CD8-positive, alpha-beta T cell (primary cell): ENCODE measurements at regions of chr15 and their contacts with region 1.

Region 1: GRCh38 chr15:75023181-75023871 is at the start of gene PPCDC:
- DNase-seq: peak; percentile 81 to 96 (median 93)
- ATAC-seq: peak; percentile 100
- H3K4me3 ChIP-seq: peak within 1 kb of the TSS; percentile 82 to 93
- H3K4me3 Mint-ChIP-seq: peak within 1 kb of the TSS; percentile 92
- H3K27ac ChIP-seq: peak within 1 kb of the TSS; percentile 76 to 77
- H3K27ac Mint-ChIP-seq: peak within 1 kb of the TSS; percentile 92
- H3K4me1 ChIP-seq: peaks cover 8% of the 10 kb centered on the region
- H3K4me1 Mint-ChIP-seq: peaks cover 14% of the 10 kb centered on the region
- H3K27me3 ChIP-seq: no peaks in the 10 kb centered on the region
- H3K27me3 Mint-ChIP-seq: no peaks in the 10 kb centered on the region
- CTCF ChIP-seq: no peak
- total RNA-seq, gene PPCDC: 6.0 to 6.5 TPM

Region 2: GRCh38 chr15:74584779-74585178 is 438.5 kb before region 1 on chr15:
- CTCF ChIA-PET with region 1: no interaction called
- POLR2A ChIA-PET with region 1: no interaction called
- intact Hi-C with region 1: no loop called
- DNase-seq: no peak
- ATAC-seq: no peak
- H3K4me3 ChIP-seq: no peak overlapping the region
- H3K4me3 Mint-ChIP-seq: no peak overlapping the region
- H3K27ac ChIP-seq: no peak overlapping the region
- H3K27ac Mint-ChIP-seq: no peak overlapping the region
- H3K4me1 ChIP-seq: no peaks in the 10 kb centered on the region
- H3K4me1 Mint-ChIP-seq: no peaks in the 10 kb centered on the region
- H3K27me3 ChIP-seq: no peaks in the 10 kb centered on the region
- H3K27me3 Mint-ChIP-seq: no peaks in the 10 kb centered on the region
- CTCF ChIP-seq: no peak

Region 3: GRCh38 chr15:74695597-74696397 is 327.5 kb before region 1 on chr15 and contains the start of gene EDC3:
- CTCF ChIA-PET with region 1: no interaction called
- POLR2A ChIA-PET with region 1: no interaction called
- intact Hi-C with region 1: loop called (anchors 2 to 5 kb)
- DNase-seq: peak; percentile 72 to 94 (median 89)
- ATAC-seq: peak; percentile 88
- H3K4me3 ChIP-seq: peak within 1 kb of the TSS; percentile 79 to 93
- H3K4me3 Mint-ChIP-seq: peak within 1 kb of the TSS; percentile 100
- H3K27ac ChIP-seq: peak within 1 kb of the TSS; percentile 80 to 83
- H3K27ac Mint-ChIP-seq: peak within 1 kb of the TSS; percentile 99
- H3K4me1 ChIP-seq: peaks cover 14% of the 10 kb centered on the region
- H3K4me1 Mint-ChIP-seq: peaks cover 47% of the 10 kb centered on the region
- H3K27me3 ChIP-seq: peaks cover 0 to 1% of the 10 kb centered on the region in 2 experiments
- H3K27me3 Mint-ChIP-seq: no peaks in the 10 kb centered on the region
- CTCF ChIP-seq: no peak
- total RNA-seq, gene EDC3: 9.8 to 11.8 TPM

Region 4: GRCh38 chr15:74889883-74890664 is 133.3 kb before region 1 on chr15 and contains the start of gene MPI:
- CTCF ChIA-PET with region 1: no interaction called
- POLR2A ChIA-PET with region 1: no interaction called
- intact Hi-C with region 1: loop called in 1 of 2 experiments (anchors 5 kb)
- DNase-seq: peak; percentile 66 to 89 (median 83)
- ATAC-seq: peak; percentile 95
- H3K4me3 ChIP-seq: peak within 1 kb of the TSS; percentile 80 to 82
- H3K4me3 Mint-ChIP-seq: peak within 1 kb of the TSS; percentile 92
- H3K27ac ChIP-seq: peak within 1 kb of the TSS; percentile 79
- H3K27ac Mint-ChIP-seq: peak within 1 kb of the TSS; percentile 88
- H3K4me1 ChIP-seq: peaks cover 39% of the 10 kb centered on the region
- H3K4me1 Mint-ChIP-seq: peaks cover 46% of the 10 kb centered on the region
- H3K27me3 ChIP-seq: no peaks in the 10 kb centered on the region
- H3K27me3 Mint-ChIP-seq: no peaks in the 10 kb centered on the region
- CTCF ChIP-seq: no peak
- total RNA-seq, gene MPI: 18.3 to 19.9 TPM

Region 5: DNA sequence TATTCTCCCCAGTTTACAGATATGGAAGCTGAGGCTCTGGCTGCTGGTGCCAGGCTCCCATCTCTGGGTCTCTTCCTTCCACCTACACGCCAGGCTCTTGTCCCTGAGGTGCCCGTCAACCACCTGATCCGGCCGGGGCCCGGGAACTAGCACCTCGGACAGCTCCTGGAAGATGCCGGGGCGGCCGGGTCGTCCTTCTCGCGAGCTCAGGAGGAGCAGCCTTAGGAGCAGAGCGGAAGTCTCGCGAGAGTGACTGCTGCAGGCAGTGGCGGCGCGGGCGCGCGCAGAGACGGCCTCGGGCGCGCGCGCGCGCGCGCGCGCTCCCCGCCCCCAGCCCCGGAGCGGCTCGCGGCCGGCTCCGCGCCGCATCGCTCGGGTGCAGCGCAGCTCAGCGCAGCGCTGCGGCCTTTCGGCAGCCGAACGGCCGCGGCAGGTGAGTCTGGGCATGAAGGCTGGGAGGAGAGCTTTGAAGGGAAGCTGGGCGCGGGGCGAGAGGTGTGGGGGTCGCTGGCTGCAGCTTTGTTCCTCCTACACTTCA is 28.0 kb before region 1 on chr15 and contains the start of gene SCAMP5:
- CTCF ChIA-PET with region 1: no interaction called
- POLR2A ChIA-PET with region 1: no interaction called
- intact Hi-C with region 1: loop called (anchors 1 kb)
- DNase-seq: peak; percentile 80 to 95 (median 91)
- ATAC-seq: peak; percentile 100
- H3K4me3 ChIP-seq: peak within 1 kb of the TSS; percentile 49 to 71
- H3K4me3 Mint-ChIP-seq: peak within 1 kb of the TSS; percentile 85
- H3K27ac ChIP-seq: no peak within 1 kb of the TSS
- H3K27ac Mint-ChIP-seq: no peak within 1 kb of the TSS
- H3K4me1 ChIP-seq: peaks cover 17% of the 10 kb centered on the region
- H3K4me1 Mint-ChIP-seq: peaks cover 11% of the 10 kb centered on the region
- H3K27me3 ChIP-seq: peaks cover 9% of the 10 kb centered on the region in 2 experiments
- H3K27me3 Mint-ChIP-seq: peaks cover 38% of the 10 kb centered on the region
- CTCF ChIP-seq: no peak
- total RNA-seq, gene SCAMP5: 0.71 to 0.72 TPM

Region 6: DNA sequence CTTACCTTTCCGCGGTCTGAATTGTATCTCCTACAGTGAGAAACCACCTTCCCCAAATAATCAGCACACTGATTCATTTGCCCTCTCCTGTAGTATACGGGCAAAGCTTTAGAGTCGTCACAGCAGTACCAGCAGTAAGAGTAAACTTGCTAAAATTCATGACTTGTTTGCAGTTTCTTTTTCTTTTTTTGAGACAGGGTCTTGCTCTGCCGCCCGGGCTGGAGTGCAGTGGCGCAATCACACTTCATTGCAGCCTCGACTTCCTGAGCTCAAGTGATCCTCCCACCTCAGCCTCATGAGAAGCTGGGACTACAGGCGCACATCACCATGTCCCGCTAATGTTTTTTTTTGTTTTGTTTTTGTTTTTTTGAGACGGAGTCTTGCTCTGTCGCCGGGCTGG is 16.1 kb before region 1 on chr15:
- CTCF ChIA-PET with region 1: no interaction called
- POLR2A ChIA-PET with region 1: no interaction called
- intact Hi-C with region 1: no loop called
- DNase-seq: no peak
- ATAC-seq: no peak
- H3K4me3 ChIP-seq: no peak overlapping the region
- H3K4me3 Mint-ChIP-seq: no peak overlapping the region
- H3K27ac ChIP-seq: no peak overlapping the region
- H3K27ac Mint-ChIP-seq: no peak overlapping the region
- H3K4me1 ChIP-seq: no peaks in the 10 kb centered on the region
- H3K4me1 Mint-ChIP-seq: no peaks in the 10 kb centered on the region
- H3K27me3 ChIP-seq: peaks cover 0 to 2% of the 10 kb centered on the region in 2 experiments
- H3K27me3 Mint-ChIP-seq: peaks cover 6% of the 10 kb centered on the region
- CTCF ChIP-seq: no peak